Activated naive CD4-positive, alpha-beta T cell treated with anti-CD3 and anti-CD28 coated beads for 36 hours (primary cell): ENCODE measurements at regions of chr19 and their contacts with region 1.

Region 1: GRCh38 chr19:18291590-18292461 is 10.4 kb upstream of the JUND start:
- DNase-seq: peak; percentile 93
- H3K4me3 Mint-ChIP-seq: peak overlapping the region; percentile 89
- H3K27ac Mint-ChIP-seq: peak overlapping the region; percentile 98
- H3K4me1 Mint-ChIP-seq: peaks cover 60% of the 10 kb centered on the region
- H3K27me3 Mint-ChIP-seq: no peaks in the 10 kb centered on the region

Region 2: GRCh38 chr19:18304458-18305310 is 12.9 kb after region 1 on chr19:
- CTCF ChIA-PET with region 1: interaction called, 24 read pairs
- intact Hi-C with region 1: loop called (anchors 1 kb)
- DNase-seq: peak; percentile 87
- H3K4me3 Mint-ChIP-seq: peak overlapping the region; percentile 97
- H3K27ac Mint-ChIP-seq: peak overlapping the region; percentile 100
- H3K4me1 Mint-ChIP-seq: peaks cover 42% of the 10 kb centered on the region
- H3K27me3 Mint-ChIP-seq: no peaks in the 10 kb centered on the region

Region 3: DNA sequence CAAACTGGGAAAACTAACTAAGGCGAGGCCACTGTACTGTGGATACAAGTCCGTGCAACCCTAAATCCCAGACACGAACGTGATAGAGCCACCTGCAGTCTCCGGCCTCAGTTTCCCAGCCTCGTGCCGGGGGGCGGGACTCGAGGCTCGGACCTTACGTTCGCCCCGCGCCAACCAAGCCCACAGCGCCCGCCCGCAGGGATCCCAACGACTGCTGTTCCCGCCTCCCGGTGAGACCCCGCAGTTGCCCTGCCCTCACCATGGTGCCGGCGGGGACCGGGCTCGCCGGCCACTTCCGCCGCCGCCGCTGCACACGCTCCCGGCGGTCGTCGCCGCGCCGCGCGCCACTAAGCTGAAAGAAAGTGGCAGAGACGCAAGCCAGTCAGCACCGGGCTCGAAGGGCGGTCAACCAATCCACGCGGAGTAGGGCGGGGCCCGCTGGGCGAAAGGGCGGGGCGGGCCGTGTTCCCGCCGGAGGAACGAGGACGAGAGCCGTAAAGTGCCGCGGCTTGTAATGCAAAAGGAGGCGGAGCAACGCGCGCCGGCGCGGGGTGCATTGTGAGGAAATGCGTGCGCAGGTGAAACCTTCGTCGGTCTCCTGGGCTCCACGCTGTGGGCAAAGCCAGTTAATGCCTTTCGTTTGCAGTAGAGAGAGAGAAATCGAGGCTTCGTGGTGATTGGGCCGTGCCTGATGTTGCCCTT is 31.1 kb after region 1 on chr19 and contains the start of gene LSM4:
- CTCF ChIA-PET with region 1: interaction called, 7 read pairs
- intact Hi-C with region 1: loop called (anchors 1 kb)
- DNase-seq: peak; percentile 100
- H3K4me3 Mint-ChIP-seq: peak within 1 kb of the TSS; percentile 93
- H3K27ac Mint-ChIP-seq: peak within 1 kb of the TSS; percentile 98
- H3K4me1 Mint-ChIP-seq: peaks cover 51% of the 10 kb centered on the region
- H3K27me3 Mint-ChIP-seq: no peaks in the 10 kb centered on the region
- total RNA-seq, gene LSM4: 439 to 451 TPM

Region 4: GRCh38 chr19:18419195-18419698 is 127.4 kb after region 1 on chr19 and contains the start of gene SSBP4:
- CTCF ChIA-PET with region 1: no interaction called
- intact Hi-C with region 1: loop called (anchors 5 kb)
- DNase-seq: peak; percentile 64
- H3K4me3 Mint-ChIP-seq: peak within 1 kb of the TSS; percentile 82
- H3K27ac Mint-ChIP-seq: peak within 1 kb of the TSS; percentile 56
- H3K4me1 Mint-ChIP-seq: peaks cover 73% of the 10 kb centered on the region
- H3K27me3 Mint-ChIP-seq: peaks cover 32% of the 10 kb centered on the region
- total RNA-seq, gene SSBP4: 62.6 to 71.4 TPM

Region 5: GRCh38 chr19:18594096-18594823 is 302.4 kb after region 1 on chr19:
- CTCF ChIA-PET with region 1: no interaction called
- intact Hi-C with region 1: no loop called
- DNase-seq: peak; percentile 75
- H3K4me3 Mint-ChIP-seq: peak overlapping the region; percentile 61
- H3K27ac Mint-ChIP-seq: no peak overlapping the region
- H3K4me1 Mint-ChIP-seq: peaks cover 21% of the 10 kb centered on the region
- H3K27me3 Mint-ChIP-seq: peaks cover 2% of the 10 kb centered on the region